Naive thymus-derived CD4-positive, alpha-beta T cell (primary cell): ENCODE measurements at regions of chr15 and their contacts with region 1.

Region 1: DNA sequence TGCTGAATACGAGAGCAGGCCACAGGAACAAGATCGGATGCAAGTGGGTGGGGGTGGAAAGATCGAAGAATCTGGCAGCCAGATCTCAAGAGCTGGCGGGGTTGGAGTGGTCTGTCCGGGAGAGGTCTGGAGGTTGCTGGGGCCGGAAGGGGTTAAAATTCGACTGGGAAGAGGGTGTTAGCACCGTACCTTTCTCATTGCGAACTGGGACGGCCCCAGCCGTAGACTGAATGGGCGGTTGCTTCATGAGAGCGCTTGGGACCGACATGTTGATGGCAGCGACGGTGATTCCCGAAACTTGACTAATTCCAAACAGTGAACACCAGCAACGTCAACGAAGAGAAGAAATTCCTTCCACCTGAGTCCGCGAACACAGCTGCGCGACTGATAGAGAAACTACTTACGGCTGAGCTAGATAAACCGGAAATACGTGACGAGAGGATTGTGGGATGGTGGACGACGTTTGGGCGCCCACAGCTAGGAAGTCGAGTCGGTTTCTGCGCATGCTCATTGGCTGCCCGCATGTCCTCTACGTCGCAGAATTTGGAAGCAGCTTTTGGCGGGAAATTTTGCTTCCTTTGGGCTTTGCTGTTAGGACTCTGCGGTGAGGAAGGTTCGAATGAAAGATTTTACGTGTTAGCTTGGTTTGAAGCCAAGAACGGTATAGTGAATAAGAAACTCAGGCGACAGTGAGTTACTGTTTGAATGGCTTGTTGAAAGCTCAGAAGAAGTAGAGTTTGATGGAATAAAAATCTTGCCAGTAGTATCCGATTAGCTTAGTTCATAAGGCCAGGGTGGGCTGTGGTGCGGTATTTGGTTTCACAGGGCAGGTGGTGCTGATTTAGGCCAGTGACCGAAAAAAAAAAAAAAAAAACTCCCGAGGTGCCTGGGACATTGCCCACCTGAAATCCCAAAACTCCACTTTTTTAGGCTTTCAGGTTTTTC is at the start of gene MFAP1:
- DNase-seq: peak; percentile 63 to 94 (median 89)
- ATAC-seq: peak; percentile 94
- H3K4me3 ChIP-seq: peak within 1 kb of the TSS; percentile 100
- H3K4me3 Mint-ChIP-seq: peak within 1 kb of the TSS; percentile 94 to 100 (median 98)
- H3K27ac ChIP-seq: peak within 1 kb of the TSS; percentile 97
- H3K27ac Mint-ChIP-seq: peak within 1 kb of the TSS; percentile 95 to 99 (median 98)
- H3K4me1 ChIP-seq: peaks cover 32 to 34% of the 10 kb centered on the region in 2 donors
- H3K4me1 Mint-ChIP-seq: peaks cover 37 to 81% (median 53%) of the 10 kb centered on the region in 7 donors
- H3K27me3 ChIP-seq: no peaks in the 10 kb centered on the region
- H3K27me3 Mint-ChIP-seq: no peaks in the 10 kb centered on the region
- total RNA-seq, gene MFAP1: 8.5 to 37.3 (median 21.8) TPM

Region 2: DNA sequence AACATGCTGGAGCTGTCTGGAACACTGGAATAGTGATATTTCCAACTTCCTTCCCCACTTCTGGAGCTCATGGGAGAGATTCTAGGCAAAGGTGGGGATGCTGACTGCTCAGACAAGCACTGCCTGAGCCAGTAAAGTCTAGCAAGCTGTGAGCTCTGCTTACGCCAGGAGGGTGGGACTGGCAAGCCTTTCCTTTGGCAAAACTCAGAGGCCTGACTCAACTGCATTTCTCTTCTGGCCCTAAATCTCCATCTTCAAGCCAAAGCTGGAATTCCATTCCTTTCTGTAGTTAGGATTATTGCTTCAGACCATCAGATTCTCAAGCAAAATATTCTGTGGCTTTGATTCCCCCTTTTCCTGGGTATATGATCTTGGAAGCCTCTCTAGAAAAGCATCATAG is 583.5 kb before region 1 on chr15:
- CTCF ChIA-PET with region 1: no interaction called
- POLR2A ChIA-PET with region 1: no interaction called
- intact Hi-C with region 1: no loop called
- DNase-seq: no peak
- ATAC-seq: no peak
- H3K4me3 ChIP-seq: no peak overlapping the region
- H3K4me3 Mint-ChIP-seq: no peak overlapping the region
- H3K27ac ChIP-seq: no peak overlapping the region
- H3K27ac Mint-ChIP-seq: no peak overlapping the region
- H3K4me1 ChIP-seq: no peaks in the 10 kb centered on the region
- H3K4me1 Mint-ChIP-seq: peaks cover 0 to 20% (median 0%) of the 10 kb centered on the region in 7 donors
- H3K27me3 ChIP-seq: no peaks in the 10 kb centered on the region
- H3K27me3 Mint-ChIP-seq: peaks cover 0 to 25% (median 9%) of the 10 kb centered on the region in 5 donors

Region 3: GRCh38 chr15:43776718-43777583 is 47.6 kb before region 1 on chr15 and contains the start of gene ELL3:
- CTCF ChIA-PET with region 1: interaction called, 3 read pairs
- POLR2A ChIA-PET with region 1: interaction called, 8 read pairs
- intact Hi-C with region 1: loop called (anchors 1 kb)
- DNase-seq: peak; percentile 69 to 87 (median 86)
- ATAC-seq: peak; percentile 87
- H3K4me3 ChIP-seq: peak within 1 kb of the TSS; percentile 100
- H3K4me3 Mint-ChIP-seq: peak within 1 kb of the TSS; percentile 89 to 97 (median 94)
- H3K27ac ChIP-seq: peak within 1 kb of the TSS; percentile 77
- H3K27ac Mint-ChIP-seq: peak within 1 kb of the TSS; percentile 87 to 97 (median 95)
- H3K4me1 ChIP-seq: peaks cover 0 to 9% of the 10 kb centered on the region in 2 donors
- H3K4me1 Mint-ChIP-seq: peaks cover 5 to 23% (median 11%) of the 10 kb centered on the region in 7 donors
- H3K27me3 ChIP-seq: no peaks in the 10 kb centered on the region
- H3K27me3 Mint-ChIP-seq: peaks cover 0 to 13% (median 0%) of the 10 kb centered on the region in 5 donors
- total RNA-seq, gene ELL3: 1.8 to 2.1 (median 1.9) TPM

Region 4: GRCh38 chr15:43791993-43792760 is 32.4 kb before region 1 on chr15 and contains the start of gene SERF2:
- CTCF ChIA-PET with region 1: no interaction called
- POLR2A ChIA-PET with region 1: interaction called, 42 read pairs
- intact Hi-C with region 1: loop called (anchors 1 kb)
- DNase-seq: peak; percentile 92 to 99 (median 97)
- ATAC-seq: peak; percentile 97
- H3K4me3 ChIP-seq: peak within 1 kb of the TSS; percentile 98
- H3K4me3 Mint-ChIP-seq: peak within 1 kb of the TSS; percentile 93 to 98 (median 96)
- H3K27ac ChIP-seq: peak within 1 kb of the TSS; percentile 100
- H3K27ac Mint-ChIP-seq: peak within 1 kb of the TSS; percentile 91 to 99 (median 98)
- H3K4me1 ChIP-seq: peaks cover 9 to 22% of the 10 kb centered on the region in 2 donors
- H3K4me1 Mint-ChIP-seq: peaks cover 33 to 54% (median 48%) of the 10 kb centered on the region in 7 donors
- H3K27me3 ChIP-seq: no peaks in the 10 kb centered on the region
- H3K27me3 Mint-ChIP-seq: peaks cover 0 to 2% (median 0%) of the 10 kb centered on the region in 5 donors
- total RNA-seq, gene SERF2: 358 to 676 (median 553) TPM

Region 5: GRCh38 chr15:43800286-43801141 is 24.1 kb before region 1 on chr15 and contains the start of gene HYPK:
- CTCF ChIA-PET with region 1: interaction called, 4 read pairs
- POLR2A ChIA-PET with region 1: interaction called, 42 read pairs
- intact Hi-C with region 1: loop called (anchors 1 kb)
- DNase-seq: peak; percentile 77 to 95 (median 91)
- ATAC-seq: peak; percentile 99
- H3K4me3 ChIP-seq: peak within 1 kb of the TSS; percentile 98
- H3K4me3 Mint-ChIP-seq: peak within 1 kb of the TSS; percentile 89 to 100 (median 99)
- H3K27ac ChIP-seq: peak within 1 kb of the TSS; percentile 85
- H3K27ac Mint-ChIP-seq: peak within 1 kb of the TSS; percentile 94 to 100 (median 97)
- H3K4me1 ChIP-seq: peaks cover 14 to 15% of the 10 kb centered on the region in 2 donors
- H3K4me1 Mint-ChIP-seq: peaks cover 21 to 54% (median 49%) of the 10 kb centered on the region in 7 donors
- H3K27me3 ChIP-seq: no peaks in the 10 kb centered on the region
- H3K27me3 Mint-ChIP-seq: no peaks in the 10 kb centered on the region
- total RNA-seq, gene HYPK: 16.9 to 32.1 (median 27.0) TPM

Region 6: GRCh38 chr15:44728576-44729407 is 904.2 kb after region 1 on chr15:
- CTCF ChIA-PET with region 1: no interaction called
- POLR2A ChIA-PET with region 1: no interaction called
- intact Hi-C with region 1: loop called (anchors 10 kb)
- DNase-seq: peak; percentile 75 to 97 (median 96)
- ATAC-seq: peak; percentile 88
- H3K4me3 ChIP-seq: peak overlapping the region; percentile 94
- H3K4me3 Mint-ChIP-seq: peak overlapping the region; percentile 87 to 100 (median 99)
- H3K27ac ChIP-seq: peak overlapping the region; percentile 99
- H3K27ac Mint-ChIP-seq: peak overlapping the region; percentile 98 to 100 (median 100)
- H3K4me1 ChIP-seq: peaks cover 52 to 56% of the 10 kb centered on the region in 2 donors
- H3K4me1 Mint-ChIP-seq: peaks cover 54 to 86% (median 77%) of the 10 kb centered on the region in 7 donors
- H3K27me3 ChIP-seq: no peaks in the 10 kb centered on the region
- H3K27me3 Mint-ChIP-seq: peaks cover 0 to 2% (median 0%) of the 10 kb centered on the region in 5 donors